AG04449 (cell line): ENCODE measurements at regions of chr12 and their contacts with region 1.

Region 1: DNA sequence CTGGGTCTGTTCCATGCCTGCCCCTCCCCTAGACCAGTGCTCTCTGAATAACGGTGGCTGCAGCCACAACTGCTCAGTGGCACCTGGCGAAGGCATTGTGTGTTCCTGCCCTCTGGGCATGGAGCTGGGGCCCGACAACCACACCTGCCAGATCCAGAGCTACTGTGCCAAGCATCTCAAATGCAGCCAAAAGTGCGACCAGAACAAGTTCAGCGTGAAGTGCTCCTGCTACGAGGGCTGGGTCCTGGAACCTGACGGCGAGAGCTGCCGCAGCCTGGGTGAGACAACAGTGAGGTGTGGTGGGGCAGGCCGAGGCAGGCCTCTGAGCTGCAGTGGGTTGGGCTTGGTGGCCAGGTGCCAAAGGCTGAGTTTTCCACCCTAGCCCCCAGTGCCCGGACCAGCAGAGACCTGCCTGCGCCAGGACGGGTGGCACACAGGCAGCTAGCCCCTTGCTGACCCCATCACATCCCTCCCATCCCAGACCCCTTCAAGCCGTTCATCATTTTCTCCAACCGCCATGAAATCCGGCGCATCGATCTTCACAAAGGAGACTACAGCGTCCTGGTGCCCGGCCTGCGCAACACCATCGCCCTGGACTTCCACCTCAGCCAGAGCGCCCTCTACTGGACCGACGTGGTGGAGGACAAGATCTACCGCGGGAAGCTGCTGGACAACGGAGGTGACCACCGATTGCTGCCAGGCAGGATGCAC is 28.2 kb upstream of the LRP1-AS start:
- DNase-seq: no peak
- H3K4me3 ChIP-seq: no peak overlapping the region
- CTCF ChIP-seq: peak; percentile 91

Region 2: GRCh38 chr12:57151741-57152630 is 23.6 kb before region 1 on chr12:
- CTCF ChIA-PET with region 1: interaction called, 30 read pairs
- POLR2A ChIA-PET with region 1: interaction called, 4 read pairs
- DNase-seq: no peak
- H3K4me3 ChIP-seq: peak overlapping the region; percentile 6; the same call in 1 of the 2 replicates
- CTCF ChIP-seq: no peak

Region 3: DNA sequence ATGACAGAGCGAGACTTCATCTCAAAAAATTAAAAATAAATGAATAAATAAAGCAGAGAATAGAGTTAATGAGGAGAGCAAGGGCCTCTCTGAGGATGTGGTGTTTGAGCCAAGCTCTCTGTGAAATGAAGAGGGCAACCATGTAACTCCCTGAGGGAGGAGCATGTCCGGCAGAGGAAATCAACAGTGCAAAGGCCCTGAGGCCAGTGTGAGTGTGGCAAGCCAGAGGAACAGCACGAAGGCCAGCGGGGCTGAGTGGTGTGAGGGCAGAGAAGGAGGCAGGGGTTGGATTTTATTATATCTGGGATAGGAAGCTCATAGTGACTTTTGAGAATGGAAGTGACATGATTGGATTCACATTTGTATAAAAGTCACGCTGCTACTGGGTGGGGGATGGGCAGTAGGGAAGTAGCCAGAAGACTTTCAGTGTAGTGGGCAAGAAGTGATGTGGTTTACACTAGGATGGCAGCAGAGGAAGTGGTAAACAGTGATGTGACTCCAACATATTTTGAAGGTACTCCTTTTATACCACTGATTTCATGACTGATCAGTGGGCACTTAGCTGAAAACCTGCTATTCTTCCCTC is 17.9 kb before region 1 on chr12:
- CTCF ChIA-PET with region 1: interaction called, 18 read pairs
- POLR2A ChIA-PET with region 1: interaction called, 3 read pairs
- DNase-seq: no peak
- H3K4me3 ChIP-seq: no peak overlapping the region
- CTCF ChIP-seq: no peak